Gastrocnemius medialis (tissue), 4 donors: ENCODE measurements at regions of chr15 and their contacts with region 1.

Region 1: DNA sequence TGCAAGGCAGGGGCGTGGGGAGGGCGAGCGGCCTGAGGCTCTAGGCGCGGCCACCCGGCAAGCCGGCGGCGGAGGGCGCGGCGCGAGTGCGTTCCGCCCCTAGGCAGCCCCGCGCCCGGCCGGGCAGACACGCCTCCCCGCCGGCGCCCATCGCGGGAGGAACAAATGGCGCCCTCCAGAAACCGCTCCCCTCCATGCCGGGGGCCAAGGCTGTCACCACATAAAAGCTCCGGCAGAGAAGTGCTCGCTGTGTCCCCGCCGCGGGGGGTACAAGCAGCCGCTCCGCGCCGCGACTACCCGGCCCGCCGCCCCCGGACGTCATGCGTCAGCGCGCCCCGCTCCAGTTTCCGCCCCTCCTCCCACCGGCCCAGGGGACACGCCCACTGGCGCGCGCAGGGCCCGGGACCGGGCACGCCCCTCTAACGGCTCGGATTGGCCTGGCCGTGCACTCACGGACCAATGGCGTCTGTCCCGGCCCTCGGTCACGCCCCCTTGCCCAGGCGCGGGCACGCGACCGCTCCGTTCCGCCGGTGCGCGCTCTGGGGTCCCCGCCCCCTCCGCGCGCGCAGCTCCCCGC is 391 bp upstream of the KLF13 start:
- DNase-seq: peak; percentile 97 to 99
- ATAC-seq: peak; percentile 67 to 70
- H3K4me3 ChIP-seq: peak overlapping the region; percentile 72 to 97 (median 88)
- H3K27ac ChIP-seq: peak overlapping the region; percentile 93 to 99 (median 98)
- H3K4me1 ChIP-seq: peaks cover 29 to 34% of the 10 kb centered on the region in 2 donors
- H3K27me3 ChIP-seq: no peaks in the 10 kb centered on the region
- CTCF ChIP-seq: peak in 3 of 5 experiments; percentile 3 to 33 (median 21)
- POLR2A ChIP-seq: peak; percentile 97 to 99

Region 2: DNA sequence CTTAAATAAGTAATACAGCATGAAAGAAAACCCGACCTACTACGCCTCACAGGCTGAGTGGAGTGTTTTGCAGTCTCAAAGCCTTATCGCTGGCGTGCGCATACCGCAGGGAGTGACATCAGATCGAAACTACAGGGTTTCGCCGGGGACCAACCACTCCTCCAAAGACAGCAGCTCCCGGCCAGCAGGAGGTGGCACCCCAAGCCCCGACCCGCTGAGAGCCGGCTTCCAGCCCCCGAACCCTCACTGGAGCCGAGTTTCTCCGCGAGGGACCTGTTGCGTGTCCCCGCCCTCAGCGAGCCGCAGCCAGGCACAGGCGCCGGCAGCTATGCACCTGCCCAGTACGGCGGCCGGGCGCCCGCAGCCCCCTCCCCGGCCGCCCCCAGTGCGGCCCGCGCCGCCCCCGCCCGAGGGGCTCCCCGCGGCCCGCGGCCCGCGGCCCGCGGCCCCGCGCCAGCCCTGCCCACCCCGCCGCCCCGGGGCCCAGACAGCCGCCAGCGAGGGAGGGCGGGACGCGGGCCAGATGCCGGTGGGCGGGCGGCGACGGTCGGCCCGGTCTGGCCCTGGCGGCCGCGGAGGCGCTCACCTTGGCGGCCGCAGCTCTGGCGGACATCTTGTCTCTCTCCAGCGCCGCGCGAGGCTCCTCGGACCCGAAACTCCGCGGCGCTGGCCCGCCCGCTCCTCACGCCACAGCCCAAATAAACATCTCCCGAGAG is 1504.7 kb before region 1 on chr15:
- in situ Hi-C with region 1: no loop called
- intact Hi-C with region 1: loop called (anchors 5 kb)
- DNase-seq: peak; percentile 62 to 73
- ATAC-seq: peak; percentile 69 to 70
- H3K4me3 ChIP-seq: peak overlapping the region; percentile 83 to 95 (median 89)
- H3K27ac ChIP-seq: peak overlapping the region; percentile 96 to 100 (median 98)
- H3K4me1 ChIP-seq: peaks cover 23 to 26% of the 10 kb centered on the region in 2 donors
- H3K27me3 ChIP-seq: no peaks in the 10 kb centered on the region
- CTCF ChIP-seq: peak in 1 of 5 experiments; percentile 37
- POLR2A ChIP-seq: peak; percentile 63 to 64

Region 3: GRCh38 chr15:30991255-30992072 is 334.8 kb before region 1 on chr15 and contains the start of gene MTMR10:
- in situ Hi-C with region 1: no loop called
- intact Hi-C with region 1: loop called (anchors 5 kb)
- DNase-seq: peak; percentile 41 to 76
- ATAC-seq: peak; percentile 84 to 87
- H3K4me3 ChIP-seq: peak within 1 kb of the TSS; percentile 83 to 100 (median 92)
- H3K27ac ChIP-seq: peak within 1 kb of the TSS; percentile 94 to 99 (median 96)
- H3K4me1 ChIP-seq: peaks cover 45 to 52% of the 10 kb centered on the region in 2 donors
- H3K27me3 ChIP-seq: no peaks in the 10 kb centered on the region
- CTCF ChIP-seq: peak in 3 of 5 experiments; percentile 24 to 65 (median 56)
- POLR2A ChIP-seq: peak; percentile 95 to 96
- total RNA-seq, gene MTMR10: 36.6 to 63.4 (median 40.4) TPM

Region 4: GRCh38 chr15:31396881-31397560 is 70.8 kb after region 1 on chr15:
- in situ Hi-C with region 1: loop called in 1 of 4 experiments (anchors 10 kb)
- intact Hi-C with region 1: loop called (anchors 1 kb)
- DNase-seq: peak; percentile 89 to 96
- ATAC-seq: peak; percentile 77 to 84
- H3K4me3 ChIP-seq: peak overlapping the region; percentile 1 to 41 (median 31)
- H3K27ac ChIP-seq: peak overlapping the region; percentile 87 to 93 (median 90)
- H3K4me1 ChIP-seq: peaks cover 23 to 27% of the 10 kb centered on the region in 2 donors
- H3K27me3 ChIP-seq: no peaks in the 10 kb centered on the region
- CTCF ChIP-seq: peak in 2 of 5 experiments; percentile 20 to 32
- POLR2A ChIP-seq: no peak

Region 5: DNA sequence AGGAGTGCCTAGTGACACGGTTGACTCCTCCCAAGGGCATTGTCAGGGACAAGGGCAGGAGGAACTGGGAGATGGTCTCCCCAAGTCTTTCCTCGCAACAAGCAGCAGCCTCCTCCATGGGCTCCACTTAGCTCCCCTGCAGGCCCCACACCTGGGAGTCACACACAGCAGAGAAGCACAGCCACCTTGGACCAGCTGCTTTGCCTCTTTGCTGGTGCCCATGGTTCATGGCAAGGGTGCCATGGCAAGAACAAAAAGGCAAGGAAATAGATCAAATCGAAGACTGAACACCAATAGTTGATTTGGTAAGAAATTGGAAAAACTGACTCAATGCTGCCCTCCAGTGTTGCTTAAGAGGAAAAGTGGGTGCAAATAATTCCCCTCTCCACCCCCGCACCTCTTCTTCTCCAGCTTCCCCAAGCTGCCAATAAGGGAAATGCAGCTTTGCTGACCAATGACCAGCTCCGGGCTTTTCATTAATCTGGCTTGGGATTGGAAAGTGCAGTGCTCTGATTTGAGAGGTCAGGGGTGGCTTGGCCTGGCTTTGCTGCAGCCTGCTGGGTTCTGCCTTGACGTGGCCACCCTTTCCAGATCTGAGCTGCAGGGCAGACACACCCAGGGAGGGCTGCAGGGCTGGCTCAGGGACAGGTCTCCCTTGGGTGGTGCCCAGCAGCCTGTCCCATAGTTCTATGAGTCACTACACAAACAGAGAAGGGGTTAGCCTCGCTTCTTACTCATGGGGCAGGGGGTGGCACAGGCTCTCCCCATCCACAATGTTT is 162.4 kb after region 1 on chr15:
- in situ Hi-C with region 1: no loop called
- intact Hi-C with region 1: loop called (anchors 5 kb)
- DNase-seq: peak; percentile 29 to 43
- ATAC-seq: peak; percentile 61 to 70
- H3K4me3 ChIP-seq: no peak overlapping the region
- H3K27ac ChIP-seq: no peak overlapping the region
- H3K4me1 ChIP-seq: peaks cover 8 to 21% of the 10 kb centered on the region in 2 donors
- H3K27me3 ChIP-seq: peaks cover 0 to 3% (median 0%) of the 10 kb centered on the region in 3 donors
- CTCF ChIP-seq: peak; percentile 74 to 89 (median 80)
- POLR2A ChIP-seq: no peak